GM10248 (cell line): ENCODE measurements at regions of chr14 and their contacts with region 1.

Region 1: DNA sequence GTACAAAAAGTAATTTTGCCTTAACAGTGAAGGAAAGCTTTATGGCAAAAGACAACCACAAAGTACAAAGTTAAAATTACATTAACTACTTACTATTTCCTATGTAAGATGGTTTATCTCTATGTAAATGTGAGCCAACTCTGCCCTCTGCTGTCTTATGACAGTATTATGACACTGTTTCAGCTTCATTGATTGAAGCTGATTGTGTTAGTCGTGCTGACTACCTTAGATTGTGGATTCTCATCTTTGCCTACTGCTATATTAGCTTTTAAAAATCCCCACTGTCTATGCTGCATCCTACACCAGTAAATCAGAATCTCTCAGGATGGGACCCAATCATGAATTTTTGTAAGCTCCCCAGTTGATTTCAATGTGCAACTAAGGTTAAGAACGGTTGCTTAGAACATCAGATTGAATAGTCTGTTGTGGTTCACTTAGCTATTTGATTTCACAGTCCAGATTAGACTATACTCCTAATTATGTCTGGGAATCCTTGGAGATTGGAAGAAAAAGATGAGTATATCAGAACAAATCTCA is 12.2 kb upstream of the SPTB start:
- DNase-seq: peak; percentile 56
- CTCF ChIP-seq: peak; percentile 54

Region 2: GRCh38 chr14:64772393-64772950 is 119.4 kb before region 1 on chr14:
- CTCF ChIA-PET with region 1: interaction called, 28 read pairs
- POLR2A ChIA-PET with region 1: no interaction called
- DNase-seq: no peak
- CTCF ChIP-seq: no peak

Region 3: DNA sequence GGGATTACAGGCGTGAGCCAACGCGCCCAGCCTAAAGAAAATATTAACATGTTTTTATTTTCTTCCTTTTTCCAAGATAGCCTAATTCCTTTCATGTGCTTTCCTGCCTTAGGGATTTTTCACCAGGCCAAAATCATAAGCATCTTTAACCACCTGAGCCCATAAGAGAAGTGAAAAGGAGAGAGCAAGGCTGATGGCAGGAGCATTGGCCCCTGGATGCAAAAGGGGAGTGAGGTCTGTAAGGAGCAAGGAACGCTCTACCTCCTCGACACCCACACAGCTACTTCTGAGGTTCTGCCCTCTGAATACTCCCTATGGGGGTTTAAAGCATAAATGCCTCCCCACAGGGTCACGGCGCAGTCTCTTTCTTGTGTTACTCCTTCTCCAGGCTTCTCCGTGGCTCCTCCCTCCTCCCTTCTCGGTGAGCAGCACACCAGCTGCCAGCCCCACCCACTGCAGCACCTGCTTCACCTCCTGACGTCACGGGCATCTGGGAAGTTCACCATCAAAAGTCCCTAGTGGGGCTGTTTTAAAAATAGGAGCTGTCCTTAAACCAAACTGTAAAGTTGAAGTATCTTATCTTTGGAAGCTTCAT is 79.6 kb before region 1 on chr14:
- CTCF ChIA-PET with region 1: interaction called, 26 read pairs
- POLR2A ChIA-PET with region 1: no interaction called
- DNase-seq: peak; percentile 49
- CTCF ChIP-seq: no peak

Region 4: GRCh38 chr14:64835431-64835830 is 56.5 kb before region 1 on chr14:
- CTCF ChIA-PET with region 1: interaction called, 14 read pairs
- POLR2A ChIA-PET with region 1: no interaction called
- DNase-seq: no peak
- CTCF ChIP-seq: no peak

Region 5: GRCh38 chr14:64868379-64868778 is 23.5 kb before region 1 on chr14:
- CTCF ChIA-PET with region 1: interaction called, 13 read pairs
- POLR2A ChIA-PET with region 1: no interaction called
- DNase-seq: no peak
- CTCF ChIP-seq: no peak

Region 6: DNA sequence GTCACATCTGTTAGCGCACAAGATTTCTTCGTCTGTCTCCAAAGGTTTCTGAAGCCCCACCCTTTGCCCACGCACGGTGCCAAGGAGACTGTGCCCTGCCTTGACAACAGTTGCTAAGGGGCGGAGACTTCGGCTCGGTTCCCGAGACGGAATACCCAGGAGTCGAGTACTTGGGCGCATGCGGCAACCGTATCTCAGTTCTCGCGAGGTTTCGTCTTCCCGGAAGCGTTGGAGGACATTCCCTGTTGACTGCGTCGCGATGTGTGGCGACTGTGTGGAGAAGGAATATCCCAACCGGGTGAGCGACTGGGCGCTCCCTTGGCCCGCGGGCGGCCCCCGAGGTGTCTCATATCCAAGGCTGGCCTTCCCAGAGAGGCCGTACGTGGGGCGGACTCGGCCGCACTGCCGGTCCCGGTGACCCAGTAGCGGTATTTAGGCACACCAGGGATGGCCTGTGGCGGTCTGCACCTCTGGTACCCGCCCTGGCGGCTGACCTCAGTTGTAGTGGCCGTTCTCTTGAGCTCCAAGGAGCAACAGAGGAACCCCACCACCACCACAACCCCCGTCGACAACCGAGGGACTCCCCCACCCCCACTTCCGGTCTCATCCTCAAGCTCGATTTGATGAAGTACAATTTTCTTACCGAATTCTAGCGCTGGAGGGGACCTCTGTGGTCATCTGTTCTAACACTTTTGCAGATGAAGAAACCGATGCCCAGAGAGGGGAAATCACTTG is 22.5 kb after region 1 on chr14 and contains the start of gene CHURC1:
- CTCF ChIA-PET with region 1: interaction called, 17 read pairs
- POLR2A ChIA-PET with region 1: no interaction called
- DNase-seq: peak; percentile 92
- CTCF ChIP-seq: no peak

Region 7: DNA sequence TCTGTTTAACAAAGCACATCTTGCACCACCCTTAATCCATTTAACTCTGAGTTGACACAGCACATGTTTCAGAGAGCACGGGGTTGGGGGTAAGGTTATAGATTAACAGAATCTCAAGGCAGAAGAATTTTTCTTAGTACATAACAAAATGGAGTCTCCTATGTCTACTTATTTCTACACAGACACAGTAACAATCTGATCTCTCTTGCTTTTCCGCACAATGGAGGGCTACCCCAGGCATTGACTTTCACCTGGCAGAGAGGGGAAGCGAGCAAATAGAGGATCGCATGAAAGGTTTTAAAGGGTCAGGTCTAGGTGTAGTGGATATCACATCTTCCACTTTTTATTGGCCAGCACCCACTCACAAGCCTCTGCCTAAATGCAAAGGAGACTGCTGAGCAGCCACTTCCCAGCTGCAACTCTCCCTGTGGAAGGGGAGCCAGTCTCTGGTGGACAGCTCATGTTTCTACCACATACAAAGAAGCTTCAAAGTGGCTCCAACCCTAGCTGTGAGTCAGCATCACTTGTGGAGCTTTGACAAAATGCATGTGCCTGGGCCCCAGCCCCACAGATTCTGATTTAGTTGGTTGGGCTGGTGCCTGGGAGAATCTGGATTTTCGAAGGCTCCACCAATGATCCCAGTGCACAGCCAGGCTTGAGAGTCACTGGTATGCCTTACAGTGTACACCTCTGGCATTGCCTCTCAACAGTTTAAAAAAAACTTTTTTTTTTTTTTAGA is 87.6 kb after region 1 on chr14:
- CTCF ChIA-PET with region 1: no interaction called
- POLR2A ChIA-PET with region 1: no interaction called
- DNase-seq: no peak
- CTCF ChIP-seq: no peak

Region 8: GRCh38 chr14:64997108-64997794 is 105.3 kb after region 1 on chr14:
- CTCF ChIA-PET with region 1: no interaction called
- POLR2A ChIA-PET with region 1: no interaction called
- DNase-seq: no peak
- CTCF ChIP-seq: no peak